ENCODE measurements at regions of chr1 and their contacts with region 1.

Region 1: GRCh38 chr1:224434691-224435317 is at the start of gene WDR26:
- DNase-seq: peak; percentile 83 to 88 (median 86)
- ATAC-seq: peak; percentile 60 to 90 (median 84)
- H3K4me3 ChIP-seq: peak within 1 kb of the TSS; percentile 65 to 95 (median 89)
- H3K27ac ChIP-seq: peak within 1 kb of the TSS; percentile 85 to 97 (median 96)
- H3K4me1 ChIP-seq: peaks cover 12 to 50% (median 38%) of the 10 kb centered on the region in 12 donors
- H3K27me3 ChIP-seq: no peaks in the 10 kb centered on the region
- CTCF ChIP-seq: peak in 1 of 12 donors; percentile 27
- POLR2A ChIP-seq: peak in 1 of 2 donors; percentile 61
- total RNA-seq, gene WDR26: 44.3 to 83.8 (median 64.2) TPM

Region 2: GRCh38 chr1:224357626-224358124 is 77.1 kb before region 1 on chr1:
- intact Hi-C with region 1: loop called in 1 of 10 experiments (anchors 2 kb)
- DNase-seq: no peak
- ATAC-seq: no peak
- H3K4me3 ChIP-seq: peak overlapping the region; percentile 48 to 97 (median 86)
- H3K27ac ChIP-seq: peak overlapping the region in 11 of 12 donors; percentile 69 to 95 (median 83)
- H3K4me1 ChIP-seq: peaks cover 0 to 31% (median 18%) of the 10 kb centered on the region in 12 donors
- H3K27me3 ChIP-seq: no peaks in the 10 kb centered on the region
- CTCF ChIP-seq: no peak
- POLR2A ChIP-seq: no peak

Region 3: DNA sequence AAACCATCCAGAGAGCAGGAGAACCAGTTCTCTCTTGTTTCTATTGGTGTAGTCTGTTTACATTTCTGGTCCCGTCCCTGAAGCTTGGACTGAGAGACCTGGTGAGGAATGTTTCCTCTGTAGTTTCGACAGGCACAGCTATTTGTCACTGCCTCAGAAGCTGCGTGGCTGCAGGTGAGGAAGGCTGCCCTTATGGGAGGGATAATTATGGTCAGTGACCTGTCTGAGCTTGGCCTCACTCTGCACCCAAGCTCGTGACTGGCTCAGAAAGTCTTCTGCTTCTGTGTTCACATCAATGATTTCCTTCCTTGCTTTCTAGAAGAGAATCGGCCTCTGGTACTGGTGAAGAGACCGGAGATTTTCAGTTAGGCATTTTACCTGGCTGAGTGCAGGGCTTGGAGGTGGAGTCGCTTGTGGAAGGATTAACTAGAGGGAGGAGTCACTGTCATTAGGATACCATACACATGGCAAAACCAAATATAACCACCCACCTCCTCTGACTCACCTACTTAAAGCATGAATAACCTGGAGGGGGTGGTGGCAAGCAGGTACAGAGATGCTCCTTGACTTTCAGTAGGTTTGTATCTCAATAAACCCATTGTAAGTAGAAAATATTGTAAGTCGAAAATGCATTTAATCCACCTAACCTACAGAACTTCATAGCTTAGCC is 19.7 kb after region 1 on chr1:
- intact Hi-C with region 1: loop called in 2 of 10 experiments (anchors 2 kb)
- DNase-seq: no peak
- ATAC-seq: no peak
- H3K4me3 ChIP-seq: no peak overlapping the region
- H3K27ac ChIP-seq: no peak overlapping the region
- H3K4me1 ChIP-seq: peaks cover 0 to 29% (median 19%) of the 10 kb centered on the region in 12 donors
- H3K27me3 ChIP-seq: no peaks in the 10 kb centered on the region
- CTCF ChIP-seq: no peak
- POLR2A ChIP-seq: no peak

Region 4: DNA sequence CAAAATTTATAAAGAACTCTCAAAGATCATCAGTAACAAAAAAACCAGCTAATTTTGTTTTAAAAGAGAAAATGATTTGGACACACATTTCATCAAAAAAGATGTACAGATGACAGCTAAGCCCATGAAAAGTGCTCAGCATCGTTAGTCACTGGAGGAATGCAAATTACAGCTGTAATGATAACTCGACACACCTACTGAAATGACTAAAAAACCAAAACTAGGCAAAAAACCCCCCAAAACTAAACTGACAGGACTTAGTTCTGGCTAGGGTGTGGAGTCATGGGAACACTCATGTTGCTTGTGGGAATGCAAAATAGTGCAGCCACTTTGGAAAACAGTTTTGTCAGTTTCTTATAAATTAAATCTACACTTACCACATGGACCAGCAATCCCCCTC is 240.8 kb after region 1 on chr1:
- intact Hi-C with region 1: no loop called
- DNase-seq: no peak
- ATAC-seq: no peak
- H3K4me3 ChIP-seq: no peak overlapping the region
- H3K27ac ChIP-seq: no peak overlapping the region
- H3K4me1 ChIP-seq: peaks cover 0 to 8% (median 0%) of the 10 kb centered on the region in 12 donors
- H3K27me3 ChIP-seq: peaks cover 0 to 7% (median 0%) of the 10 kb centered on the region in 9 donors
- CTCF ChIP-seq: no peak
- POLR2A ChIP-seq: no peak